Naive thymus-derived CD8-positive, alpha-beta T cell (primary cell): ENCODE measurements at regions of chr13 and their contacts with region 1.

Region 1: DNA sequence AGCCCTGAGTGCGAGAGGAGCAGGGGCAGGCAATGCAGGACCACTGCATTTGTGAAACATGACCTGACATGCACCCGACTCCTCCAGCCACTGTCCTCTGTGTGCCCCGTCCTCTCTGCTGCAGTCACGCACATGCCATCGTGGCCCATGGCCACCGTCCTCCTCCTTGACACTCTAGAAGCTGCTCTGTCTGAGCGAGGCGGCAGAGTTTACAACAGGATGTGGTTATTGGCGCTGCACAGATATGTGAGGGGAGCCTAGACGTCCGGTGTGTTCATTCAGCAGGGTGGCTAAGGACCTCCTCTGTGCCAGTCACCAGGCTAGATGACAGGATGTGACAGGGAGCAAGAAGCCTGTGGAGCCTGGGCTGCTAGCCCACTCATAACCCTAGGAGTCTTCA is 277.8 kb downstream of the FOXO1 start:
- DNase-seq: peak in 9 of 10 donors; percentile 36 to 90 (median 82)
- ATAC-seq: peak; percentile 93 to 94
- H3K4me3 Mint-ChIP-seq: peak overlapping the region; percentile 84 to 95 (median 88)
- H3K27ac Mint-ChIP-seq: peak overlapping the region; percentile 96 to 100 (median 99)
- H3K4me1 Mint-ChIP-seq: peaks cover 42 to 73% (median 63%) of the 10 kb centered on the region in 4 donors
- H3K27me3 Mint-ChIP-seq: no peaks in the 10 kb centered on the region

Region 2: GRCh38 chr13:40480012-40480914 is 91.6 kb after region 1 on chr13:
- POLR2A ChIA-PET with region 1: interaction called, 10 read pairs
- DNase-seq: peak in 7 of 10 donors; percentile 29 to 75 (median 45)
- ATAC-seq: peak; percentile 17 to 50
- H3K4me3 Mint-ChIP-seq: peak overlapping the region; percentile 37 to 91 (median 75)
- H3K27ac Mint-ChIP-seq: peak overlapping the region; percentile 78 to 97 (median 92)
- H3K4me1 Mint-ChIP-seq: peaks cover 47 to 85% (median 73%) of the 10 kb centered on the region in 4 donors
- H3K27me3 Mint-ChIP-seq: no peaks in the 10 kb centered on the region